CD4-positive, alpha-beta memory T cell (primary cell): ENCODE measurements at regions of chr19 and their contacts with region 1.

Region 1: GRCh38 chr19:29867984-29868383 is 56.2 kb downstream of the CCNE1 start:
- DNase-seq: no peak
- H3K4me3 ChIP-seq: no peak overlapping the region
- H3K4me3 Mint-ChIP-seq: no peak overlapping the region
- H3K27ac ChIP-seq: no peak overlapping the region
- H3K27ac Mint-ChIP-seq: no peak overlapping the region
- H3K4me1 ChIP-seq: peaks cover 6% of the 10 kb centered on the region
- H3K4me1 Mint-ChIP-seq: peaks cover 0 to 16% (median 4%) of the 10 kb centered on the region in 4 donors
- H3K27me3 ChIP-seq: peaks cover 6% of the 10 kb centered on the region
- H3K27me3 Mint-ChIP-seq: peaks cover 2 to 21% of the 10 kb centered on the region in 2 donors

Region 2: GRCh38 chr19:29735800-29736199 is 132.2 kb before region 1 on chr19:
- CTCF ChIA-PET with region 1: interaction called, 145 read pairs
- POLR2A ChIA-PET with region 1: interaction called, 10 read pairs
- intact Hi-C with region 1: loop called (anchors 1 kb)
- DNase-seq: no peak
- H3K4me3 ChIP-seq: no peak overlapping the region
- H3K4me3 Mint-ChIP-seq: no peak overlapping the region
- H3K27ac ChIP-seq: no peak overlapping the region
- H3K27ac Mint-ChIP-seq: no peak overlapping the region
- H3K4me1 ChIP-seq: no peaks in the 10 kb centered on the region
- H3K4me1 Mint-ChIP-seq: no peaks in the 10 kb centered on the region
- H3K27me3 ChIP-seq: no peaks in the 10 kb centered on the region
- H3K27me3 Mint-ChIP-seq: peaks cover 3 to 12% of the 10 kb centered on the region in 2 donors